Panc1 (cell line): ENCODE measurements at regions of chr15 and their contacts with region 1.

Region 1: DNA sequence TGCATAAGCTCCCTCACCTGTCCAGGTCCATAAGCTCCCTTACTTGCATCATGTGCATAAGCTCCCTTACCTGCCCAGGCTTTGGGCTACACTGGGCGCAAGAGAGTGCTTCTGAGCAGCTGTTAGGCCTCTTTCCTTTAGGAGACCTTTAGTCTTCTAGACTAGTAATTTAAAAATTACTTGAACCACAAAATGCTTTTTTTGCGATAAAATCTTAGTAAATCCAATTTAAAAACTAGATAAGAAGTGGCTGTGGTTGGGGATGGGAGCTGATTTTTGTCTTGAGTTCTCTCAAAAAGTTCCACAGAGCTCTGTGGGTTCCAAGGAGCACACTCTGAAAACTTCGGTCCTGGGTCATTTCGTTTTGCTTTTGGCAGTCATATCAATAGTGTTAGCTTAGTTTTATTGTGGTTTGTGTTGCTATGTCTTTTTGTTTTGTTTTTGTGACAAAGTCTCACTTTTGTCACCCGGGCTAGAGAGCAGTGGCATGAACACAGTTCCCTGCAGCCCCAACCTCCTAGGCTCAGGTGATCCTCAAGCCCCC is 6.7 kb downstream of the CEMIP start:
- DNase-seq: no peak
- ATAC-seq: no peak
- H3K4me3 ChIP-seq: no peak overlapping the region
- H3K27ac ChIP-seq: no peak overlapping the region
- H3K4me1 ChIP-seq: no peaks in the 10 kb centered on the region
- H3K27me3 ChIP-seq: peaks cover 23% of the 10 kb centered on the region
- CTCF ChIP-seq: no peak

Region 2: DNA sequence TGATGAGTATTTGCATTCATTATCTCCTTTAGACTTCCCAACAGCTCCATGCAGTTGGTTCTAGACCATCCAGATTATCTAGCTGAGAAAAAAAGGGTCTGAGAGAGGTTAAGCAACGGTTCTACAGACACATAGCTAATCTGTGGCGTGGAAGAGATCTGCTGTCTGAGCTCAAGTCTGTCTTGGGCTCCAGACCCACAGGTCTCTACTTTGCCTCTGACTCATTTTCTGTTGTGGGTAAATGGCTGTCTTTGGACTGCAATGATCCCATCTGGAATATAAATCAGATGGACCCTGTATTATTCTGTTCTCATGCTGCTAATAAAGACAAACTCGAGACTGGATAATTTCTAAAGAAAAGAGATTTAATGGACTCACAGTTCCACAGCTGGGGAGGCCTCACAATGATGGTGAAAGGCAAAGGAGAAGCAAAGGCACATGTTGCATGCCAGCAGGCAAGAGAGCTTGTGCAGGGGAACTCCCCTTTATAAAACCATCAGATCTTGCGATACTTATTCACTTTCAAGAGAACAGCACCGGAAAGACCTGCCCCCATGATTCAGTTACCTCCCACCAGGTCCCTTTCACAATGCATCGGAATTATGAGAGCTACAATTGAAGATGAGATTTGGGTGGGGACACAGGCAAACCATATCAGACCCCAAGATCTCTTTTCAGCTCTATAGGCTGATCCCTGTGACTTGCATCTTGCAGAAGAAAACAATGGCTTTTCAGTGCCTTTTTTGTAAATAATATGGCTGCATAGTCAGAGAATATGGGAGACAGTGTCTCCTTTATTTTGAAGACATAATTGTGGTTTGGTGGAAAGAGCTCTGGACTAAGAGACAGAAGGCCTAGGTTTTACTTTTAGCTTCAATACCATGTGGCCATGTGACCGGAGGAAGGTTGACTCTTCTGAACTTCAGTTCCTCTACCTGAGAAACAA is 18.0 kb after region 1 on chr15:
- CTCF ChIA-PET with region 1: no interaction called
- POLR2A ChIA-PET with region 1: interaction called, 11 read pairs
- in situ Hi-C with region 1: no loop called
- intact Hi-C with region 1: no loop called
- DNase-seq: no peak
- ATAC-seq: no peak
- H3K4me3 ChIP-seq: no peak overlapping the region
- H3K27ac ChIP-seq: no peak overlapping the region
- H3K4me1 ChIP-seq: no peaks in the 10 kb centered on the region
- H3K27me3 ChIP-seq: peaks cover 9% of the 10 kb centered on the region
- CTCF ChIP-seq: no peak